Psoas muscle (tissue), 8 donors: ENCODE measurements at regions of chr10 and their contacts with region 1.

Region 1: DNA sequence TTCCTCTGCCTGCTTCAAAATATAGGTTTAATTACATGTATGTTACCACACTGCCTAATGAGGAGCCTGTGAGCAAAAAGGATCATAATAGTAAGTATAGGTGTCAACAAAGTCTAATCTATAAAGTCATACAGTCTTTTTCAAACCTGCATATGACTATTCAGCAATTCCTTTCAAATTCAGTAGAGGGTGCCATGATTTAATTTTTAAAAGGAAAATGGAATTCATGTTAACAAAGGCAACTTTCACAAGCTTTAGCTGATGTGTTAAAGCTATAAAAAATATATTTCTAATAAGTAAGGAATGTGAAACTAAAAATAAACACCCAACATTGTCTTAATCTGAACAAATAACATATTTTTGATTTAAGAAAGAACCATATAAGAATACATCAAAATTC is 52.1 kb downstream of the MPP7 start:
- DNase-seq: no peak
- ATAC-seq: peak; percentile 37 to 80 (median 56)
- H3K4me3 ChIP-seq: no peak overlapping the region
- H3K27ac ChIP-seq: peak overlapping the region; percentile 25
- H3K4me1 ChIP-seq: peaks cover 29% of the 10 kb centered on the region
- H3K27me3 ChIP-seq: no peaks in the 10 kb centered on the region
- CTCF ChIP-seq: peak; percentile 65

Region 2: GRCh38 chr10:27959093-27959715 is 291.6 kb before region 1 on chr10:
- intact Hi-C with region 1: no loop called
- DNase-seq: no peak
- ATAC-seq: no peak
- H3K4me3 ChIP-seq: no peak overlapping the region
- H3K27ac ChIP-seq: no peak overlapping the region
- H3K4me1 ChIP-seq: no peaks in the 10 kb centered on the region
- H3K27me3 ChIP-seq: no peaks in the 10 kb centered on the region
- CTCF ChIP-seq: no peak

Region 3: DNA sequence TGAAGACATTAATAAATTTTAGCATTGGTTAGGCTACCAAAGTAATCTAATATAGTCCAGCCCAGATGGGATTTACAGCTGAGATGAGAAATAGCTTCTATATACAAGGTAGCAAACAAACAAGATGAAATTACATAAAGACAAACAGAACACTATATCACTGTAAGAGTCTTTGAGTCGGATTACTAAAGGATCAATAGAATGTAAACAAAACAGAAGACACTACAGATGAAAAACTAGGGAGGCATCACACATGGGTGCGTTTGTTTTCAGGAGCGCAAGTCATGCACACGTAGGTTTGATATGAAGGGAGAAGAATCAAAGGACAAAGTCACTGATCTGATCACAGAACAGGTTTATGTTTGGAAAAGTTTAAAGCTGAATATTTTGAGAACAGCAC is 25.6 kb after region 1 on chr10:
- intact Hi-C with region 1: no loop called
- DNase-seq: no peak
- ATAC-seq: no peak
- H3K4me3 ChIP-seq: no peak overlapping the region
- H3K27ac ChIP-seq: peak overlapping the region; percentile 82
- H3K4me1 ChIP-seq: peaks cover 43% of the 10 kb centered on the region
- H3K27me3 ChIP-seq: no peaks in the 10 kb centered on the region
- CTCF ChIP-seq: no peak

Region 4: GRCh38 chr10:28302638-28303488 is 52.1 kb after region 1 on chr10 and contains the start of gene MPP7:
- intact Hi-C with region 1: loop called in 1 of 2 experiments (anchors 5 kb)
- DNase-seq: peak; percentile 96 to 97
- ATAC-seq: peak; percentile 98 to 99 (median 98)
- H3K4me3 ChIP-seq: peak within 1 kb of the TSS; percentile 95
- H3K27ac ChIP-seq: peak within 1 kb of the TSS; percentile 95
- H3K4me1 ChIP-seq: peaks cover 28% of the 10 kb centered on the region
- H3K27me3 ChIP-seq: no peaks in the 10 kb centered on the region
- CTCF ChIP-seq: peak; percentile 41
- total RNA-seq, gene MPP7: 11.3 to 12.5 (median 12.3) TPM